Panc1 (cell line): ENCODE measurements at regions of chr16 and their contacts with region 1.

Region 1: GRCh38 chr16:24409049-24409448 is 130.3 kb upstream of the RBBP6 start:
- DNase-seq: no peak
- ATAC-seq: no peak; the same call in 1 of the 2 replicates
- H3K4me3 ChIP-seq: no peak overlapping the region
- H3K27ac ChIP-seq: no peak overlapping the region
- H3K4me1 ChIP-seq: no peaks in the 10 kb centered on the region
- H3K27me3 ChIP-seq: no peaks in the 10 kb centered on the region
- CTCF ChIP-seq: peak; percentile 56

Region 2: DNA sequence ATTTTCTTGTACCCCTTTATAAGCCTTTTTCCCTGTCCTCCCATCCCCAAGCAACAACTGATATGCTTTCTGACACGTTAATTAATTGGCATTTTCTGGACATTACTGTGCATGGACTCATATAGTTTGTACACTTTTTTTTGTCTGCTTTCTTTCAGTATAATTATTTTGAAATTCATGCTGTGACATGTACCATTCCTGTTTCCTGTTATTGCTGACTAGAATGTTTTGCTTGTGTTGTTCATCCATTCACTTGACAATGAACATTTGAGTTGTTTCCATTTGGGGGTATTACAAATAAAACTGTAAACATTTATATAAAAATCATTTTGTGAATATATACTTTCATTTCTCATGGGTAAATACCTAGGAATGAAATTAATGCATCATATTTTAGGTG is 180.9 kb after region 1 on chr16:
- CTCF ChIA-PET with region 1: interaction called, 12 read pairs
- POLR2A ChIA-PET with region 1: no interaction called
- in situ Hi-C with region 1: no loop called
- intact Hi-C with region 1: no loop called
- DNase-seq: no peak
- ATAC-seq: no peak
- H3K4me3 ChIP-seq: no peak overlapping the region
- H3K27ac ChIP-seq: no peak overlapping the region
- H3K4me1 ChIP-seq: no peaks in the 10 kb centered on the region
- H3K27me3 ChIP-seq: no peaks in the 10 kb centered on the region
- CTCF ChIP-seq: no peak